ENCODE measurements at regions of chr12 and their contacts with region 1.

Region 1: DNA sequence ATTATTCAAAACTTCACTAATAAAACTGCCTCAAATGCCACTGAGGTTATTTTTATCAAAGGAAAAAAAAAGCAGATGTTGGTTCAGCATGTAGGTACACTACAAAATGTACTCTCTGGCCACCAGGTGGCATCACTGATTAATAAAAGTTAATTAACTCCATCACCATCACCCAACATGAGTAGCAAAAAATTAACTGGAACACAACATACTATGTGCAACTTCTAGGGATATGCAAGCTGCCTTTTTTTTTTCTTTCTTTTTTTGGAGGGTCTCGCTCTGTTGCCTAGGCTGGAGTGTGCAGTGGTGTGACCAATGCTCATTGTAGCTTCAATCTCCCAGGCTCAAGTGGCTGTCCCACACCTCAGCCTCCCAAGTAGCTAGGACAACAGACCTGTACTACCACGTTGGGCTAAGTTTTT is 43.8 kb upstream of the NR2C1 start:
- DNase-seq: peak; percentile 51
- H3K4me3 ChIP-seq: no peak overlapping the region
- H3K27ac ChIP-seq: peak overlapping the region in 1 of 2 experiments; percentile 89; a peak in 2 of 4 replicates
- H3K4me1 ChIP-seq: peaks cover 0 to 28% of the 10 kb centered on the region in 2 experiments; a peak in 3 of 4 replicates
- H3K27me3 ChIP-seq: no peaks in the 10 kb centered on the region
- CTCF ChIP-seq: peak; percentile 83
- EP300 ChIP-seq: no peak
- RAD21 ChIP-seq: peak; percentile 89

Region 2: GRCh38 chr12:95105540-95105939 is 11.6 kb before region 1 on chr12:
- CTCF ChIA-PET with region 1: interaction called, 13 read pairs
- POLR2A ChIA-PET with region 1: no interaction called
- DNase-seq: no peak
- H3K4me3 ChIP-seq: no peak overlapping the region
- H3K27ac ChIP-seq: no peak overlapping the region
- H3K4me1 ChIP-seq: peaks cover 0 to 7% of the 10 kb centered on the region in 2 experiments; a peak in 1 of 4 replicates
- H3K27me3 ChIP-seq: no peaks in the 10 kb centered on the region
- CTCF ChIP-seq: no peak
- EP300 ChIP-seq: no peak
- RAD21 ChIP-seq: no peak

Region 3: DNA sequence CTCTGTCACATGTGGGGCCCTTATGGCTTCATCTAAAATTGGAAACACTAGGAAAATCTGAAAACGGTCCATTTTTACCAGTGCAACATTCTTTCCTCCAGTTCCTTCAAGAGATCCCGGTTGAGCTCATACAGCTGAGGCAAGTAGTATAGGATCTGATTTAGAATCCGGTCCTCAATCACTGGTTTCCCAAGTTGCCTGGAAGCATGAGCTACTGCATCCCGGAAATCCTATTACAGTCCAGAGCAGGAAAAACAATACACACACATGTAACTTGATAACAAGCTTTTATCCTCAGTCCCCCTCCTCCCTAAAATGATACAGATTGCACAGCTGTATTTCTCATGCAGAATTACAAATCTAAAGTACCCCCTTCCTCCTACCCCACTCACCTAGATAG is 24.1 kb after region 1 on chr12:
- CTCF ChIA-PET with region 1: interaction called, 18 read pairs
- POLR2A ChIA-PET with region 1: no interaction called
- DNase-seq: peak; percentile 17
- H3K4me3 ChIP-seq: no peak overlapping the region
- H3K27ac ChIP-seq: no peak overlapping the region
- H3K4me1 ChIP-seq: peaks cover 4 to 9% of the 10 kb centered on the region in 2 experiments; a peak in 2 of 4 replicates
- H3K27me3 ChIP-seq: no peaks in the 10 kb centered on the region
- CTCF ChIP-seq: no peak
- EP300 ChIP-seq: no peak
- RAD21 ChIP-seq: no peak

Region 4: GRCh38 chr12:95217377-95218149 is 100.4 kb after region 1 on chr12 and contains the starts of genes FGD6 and VEZT:
- CTCF ChIA-PET with region 1: interaction called, 37 read pairs
- POLR2A ChIA-PET with region 1: no interaction called
- DNase-seq: peak; percentile 94
- H3K4me3 ChIP-seq: peak within 1 kb of the TSS; percentile 93 to 97
- H3K27ac ChIP-seq: peak within 1 kb of the TSS; percentile 95 to 99
- H3K4me1 ChIP-seq: peaks cover 14 to 28% of the 10 kb centered on the region in 2 experiments; a peak in 3 of 4 replicates
- H3K27me3 ChIP-seq: no peaks in the 10 kb centered on the region
- CTCF ChIP-seq: peak; percentile 62
- EP300 ChIP-seq: no peak
- RAD21 ChIP-seq: peak; percentile 75
- polyA plus RNA-seq, gene FGD6: 2.8 and 3.8 TPM in 2 replicates
- polyA plus RNA-seq, gene VEZT: 41.2 and 55.0 TPM in 2 replicates

Region 5: DNA sequence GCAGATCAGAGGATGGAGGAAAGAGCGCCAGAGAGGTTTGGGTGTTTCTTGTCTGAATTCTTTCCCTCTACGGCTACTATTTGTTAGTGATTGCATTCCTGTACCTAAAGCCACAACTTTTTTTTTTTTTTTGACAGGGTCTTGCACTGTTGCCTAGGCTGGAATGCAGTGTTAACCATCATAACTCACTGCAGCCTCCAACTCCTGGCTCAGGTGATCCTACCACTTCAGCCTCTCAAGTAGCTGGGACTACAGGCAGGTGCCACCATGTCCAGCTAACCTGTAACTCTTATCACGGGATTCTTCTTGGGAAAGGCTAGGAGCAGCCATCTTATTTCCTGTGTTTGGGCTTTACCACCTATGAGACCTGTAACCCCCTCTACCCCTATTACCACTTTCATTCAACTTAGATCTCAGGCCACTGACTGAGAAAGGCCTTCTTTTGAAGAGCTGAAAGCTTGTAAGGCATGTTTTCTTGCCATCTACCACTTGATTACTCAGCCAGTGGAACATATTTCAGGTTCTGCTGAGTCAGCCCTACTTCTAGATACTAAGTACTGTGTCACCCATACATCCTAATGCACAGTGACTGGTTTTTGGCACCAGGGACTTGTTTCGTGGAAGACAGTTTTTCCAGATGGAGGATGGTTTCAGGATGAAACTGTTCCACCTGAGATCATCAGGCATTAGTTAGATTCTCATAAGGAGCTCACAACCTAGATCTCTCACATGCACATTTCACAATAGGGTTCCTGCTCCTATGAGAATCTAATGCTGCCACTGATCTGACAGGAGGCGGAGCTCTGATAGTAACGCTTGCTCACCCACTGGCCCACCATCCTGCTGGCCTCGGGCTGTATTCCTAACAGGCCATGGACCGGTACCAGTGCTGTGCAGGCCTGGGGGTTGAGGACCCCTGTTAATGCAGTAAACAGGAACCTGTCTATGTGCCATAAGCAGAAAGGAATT is 107.3 kb after region 1 on chr12:
- CTCF ChIA-PET with region 1: interaction called, 15 read pairs
- POLR2A ChIA-PET with region 1: no interaction called
- DNase-seq: no peak
- H3K4me3 ChIP-seq: no peak overlapping the region
- H3K27ac ChIP-seq: peak overlapping the region in 1 of 2 experiments; percentile 43; a peak in 2 of 4 replicates
- H3K4me1 ChIP-seq: peaks cover 7 to 26% of the 10 kb centered on the region in 2 experiments; a peak in 3 of 4 replicates
- H3K27me3 ChIP-seq: no peaks in the 10 kb centered on the region
- CTCF ChIP-seq: no peak
- EP300 ChIP-seq: peak in 1 of 2 experiments; percentile 49; a peak in 1 of 4 replicates
- RAD21 ChIP-seq: no peak

Region 6: DNA sequence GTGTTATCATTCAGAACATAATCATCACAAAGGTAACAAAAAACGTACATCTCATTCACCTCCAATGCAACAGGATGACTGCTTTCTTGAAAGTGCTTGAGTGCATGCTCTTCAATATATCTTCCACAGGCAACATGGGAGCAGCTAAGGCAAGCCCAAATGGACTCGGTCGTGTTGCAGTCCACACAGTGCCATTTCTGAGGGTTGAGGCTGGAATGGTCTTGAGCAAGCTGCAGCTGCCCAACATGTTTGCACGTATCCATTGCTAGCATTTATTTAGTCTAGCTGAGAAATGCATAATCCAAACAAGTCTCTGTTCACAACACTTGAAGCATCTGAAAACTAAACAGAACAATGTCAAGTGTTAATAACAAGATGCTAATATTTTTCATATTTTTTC is 416.8 kb after region 1 on chr12:
- CTCF ChIA-PET with region 1: interaction called, 22 read pairs
- POLR2A ChIA-PET with region 1: no interaction called
- DNase-seq: no peak
- H3K4me3 ChIP-seq: no peak overlapping the region
- H3K27ac ChIP-seq: no peak overlapping the region
- H3K4me1 ChIP-seq: no peaks in the 10 kb centered on the region; a peak in 1 of 4 replicates
- H3K27me3 ChIP-seq: no peaks in the 10 kb centered on the region
- CTCF ChIP-seq: no peak
- EP300 ChIP-seq: no peak
- RAD21 ChIP-seq: no peak